ENCODE measurements at regions of chr21 and their contacts with region 1.

Region 1: DNA sequence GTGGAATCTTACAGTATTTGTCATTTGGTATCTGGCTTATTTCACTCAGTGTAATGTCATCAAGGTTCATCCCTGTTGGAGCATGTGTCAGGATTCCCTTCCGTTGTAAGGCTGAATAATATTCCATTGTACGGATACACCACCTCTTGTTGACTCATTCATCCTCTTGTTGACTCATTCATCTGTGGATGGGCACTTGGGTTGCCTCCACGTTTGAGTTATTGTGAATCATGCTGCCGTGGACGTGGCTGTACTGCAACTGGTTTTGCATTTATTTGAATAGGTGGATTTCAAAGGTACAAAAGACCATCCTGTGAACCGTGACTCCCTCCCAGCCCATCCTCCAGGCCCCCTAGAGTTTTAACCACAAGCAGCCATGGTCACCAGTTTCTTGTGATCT is 11.9 kb upstream of the TCP10L start:
- DNase-seq: no peak
- H3K4me3 ChIP-seq: no peak overlapping the region
- H3K4me3 Mint-ChIP-seq: no peak overlapping the region
- H3K27ac ChIP-seq: no peak overlapping the region
- H3K27ac Mint-ChIP-seq: peak overlapping the region in 3 of 8 donors; percentile 2 to 82 (median 32)
- H3K4me1 ChIP-seq: no peaks in the 10 kb centered on the region
- H3K4me1 Mint-ChIP-seq: peaks cover 2 to 4% (median 3%) of the 10 kb centered on the region in 3 donors
- H3K27me3 ChIP-seq: no peaks in the 10 kb centered on the region
- H3K27me3 Mint-ChIP-seq: no peaks in the 10 kb centered on the region

Region 2: GRCh38 chr21:32300117-32300681 is 297.0 kb before region 1 on chr21:
- CTCF ChIA-PET with region 1: no interaction called
- POLR2A ChIA-PET with region 1: no interaction called
- DNase-seq: no peak
- H3K4me3 ChIP-seq: no peak overlapping the region
- H3K4me3 Mint-ChIP-seq: no peak overlapping the region
- H3K27ac ChIP-seq: no peak overlapping the region
- H3K27ac Mint-ChIP-seq: no peak overlapping the region
- H3K4me1 ChIP-seq: no peaks in the 10 kb centered on the region
- H3K4me1 Mint-ChIP-seq: no peaks in the 10 kb centered on the region
- H3K27me3 ChIP-seq: no peaks in the 10 kb centered on the region
- H3K27me3 Mint-ChIP-seq: no peaks in the 10 kb centered on the region

Region 3: DNA sequence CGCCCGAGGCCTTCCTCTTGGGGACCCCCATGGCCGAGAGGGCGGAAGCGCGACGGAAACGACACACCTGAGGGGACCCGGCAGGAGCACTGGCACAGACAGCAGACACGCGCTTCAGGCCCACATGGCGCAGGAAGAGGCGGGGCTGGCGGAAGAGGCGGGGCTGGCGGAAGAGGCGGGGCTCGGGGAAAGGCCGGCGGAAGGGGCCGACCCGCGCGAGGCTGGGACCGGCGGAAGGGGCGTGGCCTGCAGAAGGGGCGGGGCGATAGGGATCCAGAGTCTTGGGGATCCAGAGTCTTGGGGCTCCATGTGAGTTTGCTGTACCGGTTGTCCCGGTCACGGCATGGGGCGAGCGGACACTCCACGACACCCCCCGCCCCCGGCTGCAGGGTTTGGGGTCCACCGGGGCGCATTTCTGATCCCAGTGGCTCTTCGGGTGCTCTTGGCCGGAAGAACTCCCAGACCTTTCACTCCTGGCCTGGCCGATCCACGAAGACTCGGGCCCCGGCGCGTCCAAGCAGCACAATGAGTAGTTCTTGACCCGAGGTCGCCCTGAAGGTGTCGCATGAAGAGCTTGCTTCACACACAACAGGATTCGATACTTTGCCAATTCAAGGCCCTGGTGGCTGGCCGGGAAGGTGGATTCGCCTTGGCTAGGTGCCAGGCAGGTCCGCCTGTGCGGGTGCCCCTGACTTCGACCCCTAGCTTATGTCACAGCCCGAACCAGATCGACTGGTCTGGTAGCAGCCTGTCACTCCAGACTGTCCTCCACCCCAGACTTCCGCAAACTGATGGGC is 204.1 kb before region 1 on chr21 and contains the start of gene URB1:
- CTCF ChIA-PET with region 1: interaction called, 14 read pairs
- POLR2A ChIA-PET with region 1: interaction called, 3 read pairs
- DNase-seq: peak; percentile 92 to 96 (median 93)
- H3K4me3 ChIP-seq: peak within 1 kb of the TSS; percentile 86
- H3K4me3 Mint-ChIP-seq: peak within 1 kb of the TSS; percentile 86 to 93 (median 87)
- H3K27ac ChIP-seq: peak within 1 kb of the TSS; percentile 83
- H3K27ac Mint-ChIP-seq: peak within 1 kb of the TSS; percentile 70 to 94 (median 80)
- H3K4me1 ChIP-seq: peaks cover 26% of the 10 kb centered on the region
- H3K4me1 Mint-ChIP-seq: peaks cover 37 to 53% (median 48%) of the 10 kb centered on the region in 3 donors
- H3K27me3 ChIP-seq: no peaks in the 10 kb centered on the region
- H3K27me3 Mint-ChIP-seq: peaks cover 3 to 12% of the 10 kb centered on the region in 2 donors
- total RNA-seq, gene URB1: 38.9 to 39.8 TPM

Region 4: DNA sequence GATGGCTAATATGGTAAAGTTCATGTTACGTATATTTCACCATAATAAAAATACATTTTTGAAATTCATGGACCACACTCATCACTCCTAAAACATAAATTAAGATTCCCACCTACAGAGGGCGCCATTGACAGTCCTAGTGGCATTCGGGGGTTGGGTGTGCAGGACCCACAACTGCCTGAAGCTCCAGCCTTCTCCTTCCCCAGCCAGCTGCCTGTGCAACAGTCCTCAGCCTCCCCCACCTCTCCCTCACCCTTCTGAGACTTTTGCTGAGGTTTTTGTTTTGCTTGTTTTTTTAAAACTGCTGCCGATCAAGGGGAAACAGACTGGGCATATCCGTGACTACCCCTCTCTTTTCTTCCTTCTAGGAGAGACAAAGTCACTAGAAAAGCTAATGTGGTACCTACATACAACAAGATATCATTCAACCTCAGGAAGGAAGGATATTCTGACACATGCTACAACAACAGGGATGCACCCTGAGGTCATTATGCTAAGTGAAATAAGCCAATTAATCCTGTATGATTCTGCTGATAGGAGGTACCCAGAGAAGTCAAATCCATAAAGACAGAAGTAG is 193.9 kb before region 1 on chr21:
- CTCF ChIA-PET with region 1: interaction called, 73 read pairs
- POLR2A ChIA-PET with region 1: interaction called, 4 read pairs
- DNase-seq: peak; percentile 31 to 68 (median 59)
- H3K4me3 ChIP-seq: no peak overlapping the region
- H3K4me3 Mint-ChIP-seq: peak overlapping the region in 2 of 7 donors; percentile 5 to 41
- H3K27ac ChIP-seq: no peak overlapping the region
- H3K27ac Mint-ChIP-seq: peak overlapping the region in 5 of 8 donors; percentile 3 to 76 (median 58)
- H3K4me1 ChIP-seq: peaks cover 4% of the 10 kb centered on the region
- H3K4me1 Mint-ChIP-seq: peaks cover 19 to 32% (median 24%) of the 10 kb centered on the region in 3 donors
- H3K27me3 ChIP-seq: no peaks in the 10 kb centered on the region
- H3K27me3 Mint-ChIP-seq: peaks cover 0 to 3% of the 10 kb centered on the region in 2 donors

Region 5: DNA sequence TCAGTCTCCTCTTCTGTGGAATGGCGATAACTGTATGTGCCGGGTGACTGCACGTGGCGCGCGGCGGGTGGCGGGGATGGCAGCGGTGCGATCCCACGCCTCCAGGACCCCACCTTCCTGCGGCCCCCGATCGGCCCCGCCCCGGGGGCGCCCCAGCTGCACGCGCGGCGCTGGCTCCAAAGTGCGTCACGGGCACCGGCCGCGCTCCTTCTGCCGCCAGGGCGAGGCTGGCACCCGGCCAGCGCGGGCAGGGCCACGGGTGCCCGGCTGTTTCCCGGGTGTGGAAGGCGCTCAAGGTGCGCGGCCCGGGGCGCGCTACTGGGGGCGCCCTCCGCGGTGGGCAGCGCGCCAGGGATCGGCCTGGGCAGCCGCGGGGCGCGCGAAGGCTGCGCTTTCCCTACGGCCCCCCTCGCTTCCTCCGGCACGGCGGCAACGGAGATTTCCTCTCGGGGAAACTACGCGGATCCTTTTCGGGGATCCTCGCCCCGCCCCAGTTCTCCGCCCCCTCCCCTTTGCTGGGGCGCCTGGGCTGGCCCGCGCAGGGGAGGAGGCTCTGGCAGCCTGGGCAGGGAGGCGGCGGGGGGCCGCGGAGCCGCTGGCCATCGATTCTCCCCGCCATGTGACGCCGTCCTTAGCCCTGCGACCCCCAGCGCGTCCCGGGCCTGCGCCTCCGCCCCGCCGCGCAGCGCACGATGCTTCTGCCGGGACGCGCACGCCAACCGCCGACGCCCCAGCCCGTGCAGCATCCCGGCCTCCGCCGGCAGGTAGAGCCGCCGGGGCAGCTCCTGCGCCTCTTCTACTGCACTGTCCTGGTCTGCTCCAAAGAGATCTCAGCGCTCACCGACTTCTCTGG is 184.8 kb before region 1 on chr21 and contains the start of gene EVA1C:
- CTCF ChIA-PET with region 1: interaction called, 13 read pairs
- POLR2A ChIA-PET with region 1: interaction called, 13 read pairs
- DNase-seq: peak; percentile 68 to 86 (median 80)
- H3K4me3 ChIP-seq: peak within 1 kb of the TSS; percentile 88
- H3K4me3 Mint-ChIP-seq: peak within 1 kb of the TSS; percentile 93 to 97 (median 96)
- H3K27ac ChIP-seq: peak within 1 kb of the TSS; percentile 90
- H3K27ac Mint-ChIP-seq: peak within 1 kb of the TSS; percentile 90 to 99 (median 96)
- H3K4me1 ChIP-seq: peaks cover 34% of the 10 kb centered on the region
- H3K4me1 Mint-ChIP-seq: peaks cover 54 to 86% (median 63%) of the 10 kb centered on the region in 3 donors
- H3K27me3 ChIP-seq: no peaks in the 10 kb centered on the region
- H3K27me3 Mint-ChIP-seq: no peaks in the 10 kb centered on the region
- total RNA-seq, gene EVA1C: 13.4 to 16.2 TPM

Region 6: DNA sequence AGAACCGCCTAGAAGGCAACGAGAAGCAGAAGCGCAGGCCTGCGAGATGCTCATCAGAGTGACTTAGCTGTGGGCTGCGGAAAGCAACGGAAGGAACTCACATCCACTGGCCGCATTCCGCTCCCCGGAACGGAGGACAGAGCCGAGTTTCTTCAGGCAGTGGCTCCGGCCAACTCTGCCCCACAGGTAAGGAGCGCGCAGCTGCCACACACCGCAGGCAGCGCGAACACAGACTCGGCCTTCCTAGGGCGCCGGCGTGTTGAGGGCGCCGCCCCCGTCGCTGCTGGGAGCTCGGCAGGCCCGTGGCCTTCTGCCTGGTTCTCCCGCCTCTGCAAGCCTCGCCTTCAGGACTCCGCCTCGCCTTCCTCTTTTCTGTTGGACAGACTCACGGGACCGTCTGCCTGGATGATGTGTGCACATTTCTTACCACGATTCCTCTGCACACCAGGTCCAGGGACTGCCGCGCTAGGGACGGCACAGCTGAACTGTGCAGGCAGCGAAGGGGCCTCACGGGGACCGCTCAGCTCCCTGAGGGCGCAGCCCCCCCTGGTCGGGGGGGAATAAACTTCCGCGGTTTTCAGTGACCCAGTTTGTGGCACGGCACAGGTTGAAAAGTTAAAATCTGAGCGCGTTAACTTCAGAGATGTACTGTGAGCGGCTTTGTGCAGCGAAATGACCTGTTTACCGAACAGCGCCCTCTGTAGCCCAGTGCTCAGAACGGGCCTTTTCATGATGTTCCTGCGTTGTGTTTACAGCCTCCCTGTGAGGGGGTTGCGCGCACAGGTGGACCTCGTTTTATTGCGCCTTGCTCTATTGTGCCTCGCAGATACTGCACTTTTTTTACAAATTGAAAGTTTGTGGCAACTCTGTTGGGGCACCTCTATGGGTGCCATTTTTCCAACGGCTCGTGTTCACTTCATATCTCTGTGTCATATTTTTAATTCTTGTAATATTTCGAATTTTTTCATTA is 27.7 kb before region 1 on chr21:
- CTCF ChIA-PET with region 1: interaction called, 27 read pairs
- POLR2A ChIA-PET with region 1: interaction called, 11 read pairs
- DNase-seq: peak; percentile 71 to 89 (median 82)
- H3K4me3 ChIP-seq: peak overlapping the region; percentile 79
- H3K4me3 Mint-ChIP-seq: peak overlapping the region; percentile 87 to 98 (median 96)
- H3K27ac ChIP-seq: peak overlapping the region; percentile 21
- H3K27ac Mint-ChIP-seq: peak overlapping the region; percentile 89 to 97 (median 94)
- H3K4me1 ChIP-seq: no peaks in the 10 kb centered on the region
- H3K4me1 Mint-ChIP-seq: peaks cover 26 to 30% (median 28%) of the 10 kb centered on the region in 3 donors
- H3K27me3 ChIP-seq: no peaks in the 10 kb centered on the region
- H3K27me3 Mint-ChIP-seq: peaks cover 2 to 3% of the 10 kb centered on the region in 2 donors

Region 7: DNA sequence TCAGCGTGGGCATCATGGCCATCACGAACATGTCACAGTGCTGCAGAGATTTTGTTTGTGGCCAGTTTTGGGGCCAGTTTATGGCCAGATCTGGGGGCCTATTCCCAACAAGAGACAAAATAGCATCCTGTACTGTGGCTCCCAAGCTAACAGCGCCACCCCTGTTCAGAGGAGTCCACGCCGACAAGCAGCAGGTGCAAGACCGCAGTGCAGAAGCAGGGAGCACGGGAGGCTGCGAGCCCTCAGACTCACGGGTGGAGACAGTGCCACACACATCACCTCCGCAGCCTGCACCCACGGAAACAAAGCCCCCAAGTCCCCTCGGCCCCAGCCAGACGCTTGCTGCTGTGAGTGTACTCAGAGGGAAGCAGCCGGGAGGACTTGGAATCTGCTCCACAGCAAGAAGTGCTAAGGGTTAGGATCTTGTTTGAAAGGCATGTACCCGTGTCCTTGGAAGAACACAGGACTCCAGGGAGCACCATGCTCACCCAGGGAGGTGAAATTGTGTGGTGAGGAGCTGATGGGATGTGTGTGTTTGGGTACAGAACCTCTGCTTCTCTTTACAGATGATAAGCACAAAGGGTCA is 19.0 kb before region 1 on chr21:
- CTCF ChIA-PET with region 1: interaction called, 21 read pairs
- POLR2A ChIA-PET with region 1: no interaction called
- DNase-seq: peak in 4 of 5 donors; percentile 16 to 68 (median 22)
- H3K4me3 ChIP-seq: no peak overlapping the region
- H3K4me3 Mint-ChIP-seq: peak overlapping the region in 2 of 7 donors; percentile 15 to 28
- H3K27ac ChIP-seq: no peak overlapping the region
- H3K27ac Mint-ChIP-seq: peak overlapping the region in 1 of 8 donors; percentile 22
- H3K4me1 ChIP-seq: no peaks in the 10 kb centered on the region
- H3K4me1 Mint-ChIP-seq: peaks cover 0 to 13% (median 0%) of the 10 kb centered on the region in 3 donors
- H3K27me3 ChIP-seq: no peaks in the 10 kb centered on the region
- H3K27me3 Mint-ChIP-seq: peaks cover 8 to 10% of the 10 kb centered on the region in 2 donors

Region 8: GRCh38 chr21:32612075-32612998 is 15.1 kb after region 1 on chr21 and contains the start of gene CFAP298:
- CTCF ChIA-PET with region 1: interaction called, 23 read pairs
- POLR2A ChIA-PET with region 1: interaction called, 6 read pairs
- DNase-seq: peak; percentile 79 to 94 (median 90)
- H3K4me3 ChIP-seq: peak within 1 kb of the TSS; percentile 97
- H3K4me3 Mint-ChIP-seq: peak within 1 kb of the TSS; percentile 95 to 99 (median 97)
- H3K27ac ChIP-seq: peak within 1 kb of the TSS; percentile 97
- H3K27ac Mint-ChIP-seq: peak within 1 kb of the TSS; percentile 97 to 99 (median 99)
- H3K4me1 ChIP-seq: peaks cover 13% of the 10 kb centered on the region
- H3K4me1 Mint-ChIP-seq: peaks cover 14 to 29% (median 22%) of the 10 kb centered on the region in 3 donors
- H3K27me3 ChIP-seq: no peaks in the 10 kb centered on the region
- H3K27me3 Mint-ChIP-seq: peaks cover 0 to 3% of the 10 kb centered on the region in 2 donors
- total RNA-seq, gene CFAP298: 49.4 to 51.9 TPM

Region 9: GRCh38 chr21:33688353-33688752 is 1091.1 kb after region 1 on chr21:
- CTCF ChIA-PET with region 1: no interaction called
- POLR2A ChIA-PET with region 1: no interaction called
- DNase-seq: no peak
- H3K4me3 ChIP-seq: no peak overlapping the region
- H3K4me3 Mint-ChIP-seq: no peak overlapping the region
- H3K27ac ChIP-seq: no peak overlapping the region
- H3K27ac Mint-ChIP-seq: no peak overlapping the region
- H3K4me1 ChIP-seq: no peaks in the 10 kb centered on the region
- H3K4me1 Mint-ChIP-seq: no peaks in the 10 kb centered on the region
- H3K27me3 ChIP-seq: no peaks in the 10 kb centered on the region
- H3K27me3 Mint-ChIP-seq: peaks cover 2 to 24% of the 10 kb centered on the region in 2 donors